PC-3 (cell line): ENCODE measurements at regions of chr20 and their contacts with region 1.

Region 1: GRCh38 chr20:35269055-35269781 is 8.7 kb downstream of the MMP24OS start:
- DNase-seq: peak; percentile 67
- ATAC-seq: peak; percentile 80
- H3K4me3 ChIP-seq: no peak overlapping the region
- H3K27ac ChIP-seq: no peak overlapping the region
- H3K4me1 ChIP-seq: peaks cover 5% of the 10 kb centered on the region
- H3K27me3 ChIP-seq: no peaks in the 10 kb centered on the region
- CTCF ChIP-seq: peak; percentile 94

Region 2: DNA sequence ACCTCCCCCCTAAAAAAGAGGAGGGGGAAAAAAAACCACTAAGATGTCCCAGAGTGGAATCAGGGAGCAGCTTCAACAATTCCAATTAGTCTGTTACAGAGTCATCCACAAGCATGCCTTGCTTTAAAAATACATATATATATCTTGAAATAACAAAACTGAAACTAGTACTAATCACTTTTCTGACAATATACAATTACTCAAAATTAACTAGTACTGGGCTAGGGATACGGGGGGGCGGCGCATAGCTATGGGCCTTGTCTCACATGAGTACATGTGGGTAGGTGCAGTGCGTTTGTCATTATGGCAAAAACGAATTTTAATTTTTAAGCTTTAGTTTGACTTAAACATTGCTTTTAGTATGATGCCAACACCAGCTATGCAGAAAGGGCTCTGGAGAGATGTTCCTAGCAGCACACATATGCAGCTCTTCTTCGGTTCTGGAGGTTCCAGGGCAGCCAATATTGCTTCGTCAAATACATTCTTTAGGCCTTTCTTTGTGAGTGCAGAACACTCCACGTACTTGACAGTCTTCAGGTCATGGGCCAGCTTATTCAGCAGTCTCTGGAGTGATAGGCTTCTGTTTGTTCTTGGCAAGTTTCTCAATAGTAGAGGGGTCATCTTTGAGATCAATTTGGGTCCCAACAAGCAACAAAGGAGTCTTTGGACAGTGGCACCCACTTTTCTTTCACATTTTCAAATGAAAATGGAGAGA is 867.3 kb before region 1 on chr20:
- CTCF ChIA-PET with region 1: no interaction called
- POLR2A ChIA-PET with region 1: interaction called, 10 read pairs
- intact Hi-C with region 1: no loop called
- DNase-seq: no peak
- ATAC-seq: no peak
- H3K4me3 ChIP-seq: no peak overlapping the region
- H3K27ac ChIP-seq: no peak overlapping the region
- H3K4me1 ChIP-seq: peaks cover 24% of the 10 kb centered on the region
- H3K27me3 ChIP-seq: no peaks in the 10 kb centered on the region
- CTCF ChIP-seq: no peak

Region 3: GRCh38 chr20:35252037-35252461 is 17.2 kb before region 1 on chr20:
- CTCF ChIA-PET with region 1: no interaction called
- POLR2A ChIA-PET with region 1: no interaction called
- intact Hi-C with region 1: no loop called
- DNase-seq: no peak
- ATAC-seq: no peak
- H3K4me3 ChIP-seq: no peak overlapping the region
- H3K27ac ChIP-seq: no peak overlapping the region
- H3K4me1 ChIP-seq: no peaks in the 10 kb centered on the region
- H3K27me3 ChIP-seq: no peaks in the 10 kb centered on the region
- CTCF ChIP-seq: no peak